Naive thymus-derived CD4-positive, alpha-beta T cell (primary cell): ENCODE measurements at regions of chr21 and their contacts with region 1.

Region 1: GRCh38 chr21:32612075-32612998 is at the start of gene CFAP298:
- DNase-seq: peak; percentile 78 to 93 (median 89)
- ATAC-seq: peak; percentile 97
- H3K4me3 ChIP-seq: peak within 1 kb of the TSS; percentile 100
- H3K4me3 Mint-ChIP-seq: peak within 1 kb of the TSS; percentile 95 to 98 (median 97)
- H3K27ac ChIP-seq: peak within 1 kb of the TSS; percentile 87
- H3K27ac Mint-ChIP-seq: peak within 1 kb of the TSS; percentile 90 to 98 (median 97)
- H3K4me1 ChIP-seq: peaks cover 12% of the 10 kb centered on the region in 2 donors
- H3K4me1 Mint-ChIP-seq: peaks cover 0 to 34% (median 12%) of the 10 kb centered on the region in 7 donors
- H3K27me3 ChIP-seq: no peaks in the 10 kb centered on the region
- H3K27me3 Mint-ChIP-seq: peaks cover 0 to 15% (median 0%) of the 10 kb centered on the region in 5 donors
- total RNA-seq, gene CFAP298: 16.8 to 34.5 (median 31.3) TPM

Region 2: GRCh38 chr21:32278518-32279376 is 333.6 kb before region 1 on chr21 and contains the start of gene MIS18A:
- CTCF ChIA-PET with region 1: no interaction called
- POLR2A ChIA-PET with region 1: no interaction called
- intact Hi-C with region 1: loop called in 1 of 2 experiments (anchors 1 kb)
- DNase-seq: peak; percentile 92 to 98 (median 95)
- ATAC-seq: peak; percentile 97
- H3K4me3 ChIP-seq: peak within 1 kb of the TSS; percentile 90
- H3K4me3 Mint-ChIP-seq: peak within 1 kb of the TSS; percentile 95 to 100 (median 98)
- H3K27ac ChIP-seq: peak within 1 kb of the TSS; percentile 70
- H3K27ac Mint-ChIP-seq: peak within 1 kb of the TSS; percentile 90 to 97 (median 94)
- H3K4me1 ChIP-seq: peaks cover 14 to 16% of the 10 kb centered on the region in 2 donors
- H3K4me1 Mint-ChIP-seq: peaks cover 8 to 36% (median 33%) of the 10 kb centered on the region in 7 donors
- H3K27me3 ChIP-seq: no peaks in the 10 kb centered on the region
- H3K27me3 Mint-ChIP-seq: no peaks in the 10 kb centered on the region
- total RNA-seq, gene MIS18A: 3.3 to 16.4 (median 8.4) TPM

Region 3: GRCh38 chr21:32412162-32413014 is 199.9 kb before region 1 on chr21 and contains the start of gene EVA1C:
- CTCF ChIA-PET with region 1: no interaction called
- POLR2A ChIA-PET with region 1: interaction called, 7 read pairs
- intact Hi-C with region 1: loop called (anchors 1 to 5 kb)
- DNase-seq: peak; percentile 56 to 73 (median 70)
- ATAC-seq: peak; percentile 81
- H3K4me3 ChIP-seq: peak within 1 kb of the TSS; percentile 76
- H3K4me3 Mint-ChIP-seq: peak within 1 kb of the TSS; percentile 88 to 97 (median 94)
- H3K27ac ChIP-seq: peak within 1 kb of the TSS; percentile 85
- H3K27ac Mint-ChIP-seq: peak within 1 kb of the TSS; percentile 89 to 95 (median 93)
- H3K4me1 ChIP-seq: peaks cover 14 to 29% of the 10 kb centered on the region in 2 donors
- H3K4me1 Mint-ChIP-seq: peaks cover 22 to 57% (median 28%) of the 10 kb centered on the region in 7 donors
- H3K27me3 ChIP-seq: no peaks in the 10 kb centered on the region
- H3K27me3 Mint-ChIP-seq: peaks cover 0 to 7% (median 0%) of the 10 kb centered on the region in 5 donors
- total RNA-seq, gene EVA1C: 2.6 to 16.3 (median 12.3) TPM

Region 4: GRCh38 chr21:32562426-32562825 is 49.9 kb before region 1 on chr21:
- CTCF ChIA-PET with region 1: no interaction called
- POLR2A ChIA-PET with region 1: no interaction called
- intact Hi-C with region 1: no loop called
- DNase-seq: no peak
- ATAC-seq: no peak
- H3K4me3 ChIP-seq: no peak overlapping the region
- H3K4me3 Mint-ChIP-seq: no peak overlapping the region
- H3K27ac ChIP-seq: no peak overlapping the region
- H3K27ac Mint-ChIP-seq: no peak overlapping the region
- H3K4me1 ChIP-seq: no peaks in the 10 kb centered on the region
- H3K4me1 Mint-ChIP-seq: no peaks in the 10 kb centered on the region
- H3K27me3 ChIP-seq: no peaks in the 10 kb centered on the region
- H3K27me3 Mint-ChIP-seq: peaks cover 0 to 9% (median 0%) of the 10 kb centered on the region in 5 donors

Region 5: GRCh38 chr21:32666258-32666657 is 53.9 kb after region 1 on chr21:
- CTCF ChIA-PET with region 1: no interaction called
- POLR2A ChIA-PET with region 1: no interaction called
- intact Hi-C with region 1: no loop called
- DNase-seq: no peak
- ATAC-seq: no peak
- H3K4me3 ChIP-seq: no peak overlapping the region
- H3K4me3 Mint-ChIP-seq: no peak overlapping the region
- H3K27ac ChIP-seq: no peak overlapping the region
- H3K27ac Mint-ChIP-seq: no peak overlapping the region
- H3K4me1 ChIP-seq: no peaks in the 10 kb centered on the region
- H3K4me1 Mint-ChIP-seq: no peaks in the 10 kb centered on the region
- H3K27me3 ChIP-seq: no peaks in the 10 kb centered on the region
- H3K27me3 Mint-ChIP-seq: no peaks in the 10 kb centered on the region

Region 6: DNA sequence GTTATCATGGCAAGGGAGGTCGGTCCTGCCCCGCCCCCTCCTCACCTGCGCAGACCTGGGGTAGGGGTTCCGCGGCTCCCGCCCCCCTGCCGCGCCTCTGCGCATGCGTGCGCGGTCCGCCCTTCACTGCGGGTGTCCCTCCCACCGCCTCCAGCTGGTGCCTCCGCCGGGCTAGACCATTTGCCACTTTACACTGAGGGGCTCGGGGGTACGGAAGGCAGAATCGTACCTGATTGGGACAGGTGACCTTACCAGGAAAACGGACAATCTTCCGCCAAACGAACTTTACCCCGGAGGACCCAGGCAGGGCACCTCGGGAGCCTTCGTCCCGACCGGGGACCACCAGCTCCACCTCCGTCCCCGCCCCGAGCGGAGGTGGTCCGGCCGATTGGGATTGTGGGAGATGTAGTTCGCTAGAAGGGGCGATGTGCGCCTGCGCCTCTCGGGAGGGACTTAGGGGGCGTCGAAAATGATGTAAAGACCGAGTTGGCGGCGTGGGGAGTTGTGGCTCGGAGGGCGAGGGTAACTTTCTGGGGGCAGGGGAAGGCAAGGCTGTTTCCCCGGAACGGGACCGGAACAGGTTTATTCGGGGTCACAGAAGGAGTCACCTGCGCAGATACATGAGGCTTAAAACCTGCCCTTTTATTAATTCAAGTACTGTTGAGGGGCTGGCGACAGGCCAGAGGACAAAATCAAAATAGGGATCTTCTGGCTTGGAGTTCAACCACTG is 879.2 kb after region 1 on chr21 and contains the start of gene DNAJC28:
- CTCF ChIA-PET with region 1: no interaction called
- POLR2A ChIA-PET with region 1: no interaction called
- intact Hi-C with region 1: loop called in 1 of 2 experiments (anchors 1 kb)
- DNase-seq: peak; percentile 91 to 96 (median 95)
- ATAC-seq: peak; percentile 99
- H3K4me3 ChIP-seq: peak within 1 kb of the TSS; percentile 93
- H3K4me3 Mint-ChIP-seq: peak within 1 kb of the TSS; percentile 86 to 97 (median 92)
- H3K27ac ChIP-seq: peak within 1 kb of the TSS; percentile 74
- H3K27ac Mint-ChIP-seq: peak within 1 kb of the TSS; percentile 73 to 97 (median 92)
- H3K4me1 ChIP-seq: peaks cover 0 to 5% of the 10 kb centered on the region in 2 donors
- H3K4me1 Mint-ChIP-seq: peaks cover 5 to 14% (median 12%) of the 10 kb centered on the region in 7 donors
- H3K27me3 ChIP-seq: no peaks in the 10 kb centered on the region
- H3K27me3 Mint-ChIP-seq: peaks cover 0 to 15% (median 0%) of the 10 kb centered on the region in 5 donors
- total RNA-seq, gene DNAJC28: 0.27 to 1.5 (median 0.61) TPM in 4 of 5 experiments, not detected in the other

Region 7: GRCh38 chr21:33858670-33859372 is 1246.5 kb after region 1 on chr21:
- CTCF ChIA-PET with region 1: no interaction called
- POLR2A ChIA-PET with region 1: no interaction called
- intact Hi-C with region 1: no loop called
- DNase-seq: no peak
- ATAC-seq: no peak
- H3K4me3 ChIP-seq: no peak overlapping the region
- H3K4me3 Mint-ChIP-seq: no peak overlapping the region
- H3K27ac ChIP-seq: no peak overlapping the region
- H3K27ac Mint-ChIP-seq: no peak overlapping the region
- H3K4me1 ChIP-seq: no peaks in the 10 kb centered on the region
- H3K4me1 Mint-ChIP-seq: no peaks in the 10 kb centered on the region
- H3K27me3 ChIP-seq: no peaks in the 10 kb centered on the region
- H3K27me3 Mint-ChIP-seq: peaks cover 0 to 10% (median 0%) of the 10 kb centered on the region in 5 donors

Region 8: GRCh38 chr21:34614633-34615486 is 2002.5 kb after region 1 on chr21 and contains the start of gene RCAN1:
- CTCF ChIA-PET with region 1: no interaction called
- POLR2A ChIA-PET with region 1: no interaction called
- intact Hi-C with region 1: loop called in 1 of 2 experiments (anchors 10 kb)
- DNase-seq: peak; percentile 70 to 87 (median 85)
- ATAC-seq: peak; percentile 99
- H3K4me3 ChIP-seq: peak within 1 kb of the TSS; percentile 67
- H3K4me3 Mint-ChIP-seq: peak within 1 kb of the TSS; percentile 83 to 96 (median 93)
- H3K27ac ChIP-seq: peak within 1 kb of the TSS; percentile 57
- H3K27ac Mint-ChIP-seq: peak within 1 kb of the TSS; percentile 82 to 95 (median 83)
- H3K4me1 ChIP-seq: peaks cover 4 to 12% of the 10 kb centered on the region in 2 donors
- H3K4me1 Mint-ChIP-seq: peaks cover 15 to 25% (median 20%) of the 10 kb centered on the region in 7 donors
- H3K27me3 ChIP-seq: no peaks in the 10 kb centered on the region
- H3K27me3 Mint-ChIP-seq: peaks cover 0 to 32% (median 0%) of the 10 kb centered on the region in 5 donors
- total RNA-seq, gene RCAN1: 3.0 to 8.1 (median 4.9) TPM